ENCODE measurements at regions of chr13 and their contacts with region 1.

Region 1: DNA sequence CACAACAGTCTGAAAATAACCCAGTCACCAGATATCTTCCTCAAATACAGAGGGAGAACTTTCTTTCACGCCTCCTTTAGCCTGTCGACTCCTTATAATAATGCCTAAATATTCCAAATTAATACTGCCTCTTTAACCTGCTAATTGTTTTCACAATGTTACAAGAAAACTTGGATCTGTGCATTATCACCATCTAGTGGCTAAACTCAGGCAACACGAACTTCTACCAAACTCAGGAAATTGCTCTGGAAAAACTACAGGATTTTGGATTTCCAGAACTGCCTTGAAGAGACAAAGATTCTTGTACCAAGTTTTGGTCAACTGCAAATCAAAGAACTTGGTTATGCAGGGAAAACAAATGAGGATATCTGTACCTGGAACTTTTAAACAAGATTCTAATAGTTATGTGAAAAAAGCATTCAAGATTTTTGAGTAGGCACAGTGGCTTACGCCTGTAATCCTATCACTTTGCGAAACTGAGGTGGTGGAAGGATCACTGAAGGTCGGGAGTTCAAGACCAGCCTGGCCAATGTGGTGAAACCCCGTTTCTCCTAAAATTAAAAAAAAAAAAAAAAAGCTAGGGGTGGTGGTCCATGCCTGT is 10.8 kb downstream of the CLN5 start:
- DNase-seq: no peak
- CTCF ChIP-seq: peak; percentile 54

Region 2: GRCh38 chr13:76991796-76992547 is 10.7 kb before region 1 on chr13 and contains the start of gene CLN5:
- CTCF ChIA-PET with region 1: interaction called, 16 read pairs
- POLR2A ChIA-PET with region 1: interaction called, 3 read pairs
- DNase-seq: peak; percentile 97
- CTCF ChIP-seq: no peak

Region 3: GRCh38 chr13:77016888-77017623 is 14.4 kb after region 1 on chr13:
- CTCF ChIA-PET with region 1: interaction called, 39 read pairs
- POLR2A ChIA-PET with region 1: no interaction called
- DNase-seq: no peak
- CTCF ChIP-seq: no peak